ENCODE measurements at regions of chr16 and their contacts with region 1.

Region 1: DNA sequence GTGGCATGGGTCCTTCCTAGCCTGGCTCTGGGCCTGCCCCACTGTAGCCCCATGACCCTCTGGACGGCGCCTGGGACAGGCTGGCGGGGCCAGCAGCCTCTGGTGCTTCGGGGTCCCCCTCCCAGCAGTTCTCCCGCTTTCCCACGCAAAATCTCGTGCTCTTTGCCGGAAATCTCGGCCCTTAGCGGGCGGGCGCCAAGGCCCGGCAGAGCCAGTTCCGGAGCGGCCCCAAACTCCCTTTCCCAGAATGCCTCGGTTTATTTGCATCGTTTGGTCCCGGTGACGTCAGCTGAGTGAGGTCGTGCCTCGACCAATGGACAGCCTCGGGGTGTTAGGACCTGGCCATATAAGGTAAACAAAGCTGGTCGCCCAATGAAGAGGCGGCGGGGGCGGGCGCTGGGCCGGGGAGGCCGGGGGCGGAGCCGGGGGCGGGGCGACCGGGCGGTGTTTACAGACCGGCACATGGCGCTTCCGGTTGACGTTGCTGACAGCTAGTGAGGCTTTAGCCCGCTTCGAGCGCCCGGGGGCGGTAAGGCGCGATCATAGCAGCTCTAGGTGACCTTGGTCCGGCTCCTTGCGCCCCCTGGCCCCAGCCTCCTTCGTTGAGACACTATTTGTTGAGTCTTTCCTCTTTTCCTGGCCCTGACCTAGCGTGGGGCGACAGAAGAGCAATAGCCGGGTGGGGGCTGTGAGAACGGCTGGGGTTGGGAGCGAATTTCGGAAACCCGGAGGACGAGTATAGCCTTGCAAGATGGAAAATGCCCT is 1.5 kb upstream of the UBALD1 start:
- DNase-seq: peak; percentile 100
- ATAC-seq: peak; percentile 80
- H3K4me3 ChIP-seq: peak overlapping the region; percentile 79 to 80
- H3K27ac ChIP-seq: peak overlapping the region; percentile 92
- H3K4me1 ChIP-seq: peaks cover 25 to 42% of the 10 kb centered on the region in 2 experiments
- H3K27me3 ChIP-seq: no peaks in the 10 kb centered on the region
- CTCF ChIP-seq: peak in 2 of 3 experiments; percentile 26 to 28; a peak in 3 of 6 replicates
- POLR2A ChIP-seq: no peak
- RAD21 ChIP-seq: no peak

Region 2: GRCh38 chr16:4425378-4426020 is 190.7 kb before region 1 on chr16 and contains the start of gene DNAJA3:
- CTCF ChIA-PET with region 1: no interaction called
- POLR2A ChIA-PET with region 1: no interaction called
- RAD21 ChIA-PET with region 1: no interaction called
- intact Hi-C with region 1: loop called (anchors 10 kb)
- DNase-seq: peak; percentile 92
- ATAC-seq: peak; percentile 92
- H3K4me3 ChIP-seq: peak within 1 kb of the TSS; percentile 95 to 97
- H3K27ac ChIP-seq: peak within 1 kb of the TSS; percentile 96
- H3K4me1 ChIP-seq: peaks cover 7 to 18% of the 10 kb centered on the region in 2 experiments
- H3K27me3 ChIP-seq: no peaks in the 10 kb centered on the region
- CTCF ChIP-seq: no peak
- POLR2A ChIP-seq: no peak
- RAD21 ChIP-seq: no peak
- total RNA-seq, gene DNAJA3: 93.3 TPM

Region 3: GRCh38 chr16:4775005-4775404 is 158.8 kb after region 1 on chr16:
- CTCF ChIA-PET with region 1: no interaction called
- POLR2A ChIA-PET with region 1: no interaction called
- RAD21 ChIA-PET with region 1: no interaction called
- intact Hi-C with region 1: no loop called
- DNase-seq: no peak
- ATAC-seq: no peak
- H3K4me3 ChIP-seq: no peak overlapping the region
- H3K27ac ChIP-seq: no peak overlapping the region
- H3K4me1 ChIP-seq: peaks cover 0 to 5% of the 10 kb centered on the region in 2 experiments; a peak in 3 of 4 replicates
- H3K27me3 ChIP-seq: no peaks in the 10 kb centered on the region
- CTCF ChIP-seq: no peak
- POLR2A ChIP-seq: no peak
- RAD21 ChIP-seq: no peak